PC-9 (cell line): ENCODE measurements at regions of chr10 and their contacts with region 1.

Region 1: GRCh38 chr10:49538381-49539319 is at the start of gene ERCC6:
- DNase-seq: peak; percentile 97 to 98
- H3K4me3 ChIP-seq: peak within 1 kb of the TSS; percentile 99
- H3K27ac ChIP-seq: peak within 1 kb of the TSS; percentile 90
- H3K4me1 ChIP-seq: peaks cover 26% of the 10 kb centered on the region
- H3K27me3 ChIP-seq: no peaks in the 10 kb centered on the region
- CTCF ChIP-seq: no peak
- total RNA-seq, gene ERCC6: 47.1 and 49.7 TPM in 2 replicates

Region 2: DNA sequence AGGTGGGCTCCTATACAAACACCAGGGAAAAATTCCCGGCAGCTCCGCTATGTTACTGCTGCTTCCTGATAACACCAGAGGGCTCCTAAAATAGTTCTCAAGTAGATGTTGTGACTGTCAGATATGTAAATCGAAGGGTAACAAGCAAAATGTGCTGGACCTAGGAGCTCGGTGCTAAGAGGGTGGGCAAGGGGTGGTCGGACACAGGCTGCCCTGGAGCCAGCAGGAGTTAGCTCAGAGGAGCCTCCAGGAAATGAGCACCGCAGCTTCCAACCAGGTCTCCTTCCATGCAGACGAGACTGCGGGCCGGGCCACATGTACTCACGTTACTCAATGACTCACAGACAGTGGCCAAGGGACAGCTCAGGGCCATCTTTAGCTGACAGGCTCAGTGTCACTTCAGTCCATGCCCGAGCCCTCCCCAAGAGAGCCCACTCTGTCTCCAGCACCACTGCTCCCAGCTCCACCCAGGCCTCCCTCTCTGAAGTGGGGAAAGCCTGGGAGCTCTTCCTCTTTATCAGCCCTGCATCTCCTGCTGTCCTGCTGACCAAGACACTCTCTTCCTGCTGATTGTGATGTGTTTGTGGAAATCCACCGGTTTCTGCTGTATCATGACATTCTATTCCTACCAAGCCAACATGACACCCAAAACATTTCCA is 313.3 kb before region 1 on chr10:
- CTCF ChIA-PET with region 1: no interaction called
- POLR2A ChIA-PET with region 1: no interaction called
- intact Hi-C with region 1: no loop called
- DNase-seq: no peak
- H3K4me3 ChIP-seq: no peak overlapping the region
- H3K27ac ChIP-seq: no peak overlapping the region
- H3K4me1 ChIP-seq: no peaks in the 10 kb centered on the region
- H3K27me3 ChIP-seq: 0 out of 2 replicates have a peak, but pooled peaks cover under 1% of the 10 kb centered on the region
- CTCF ChIP-seq: no peak

Region 3: DNA sequence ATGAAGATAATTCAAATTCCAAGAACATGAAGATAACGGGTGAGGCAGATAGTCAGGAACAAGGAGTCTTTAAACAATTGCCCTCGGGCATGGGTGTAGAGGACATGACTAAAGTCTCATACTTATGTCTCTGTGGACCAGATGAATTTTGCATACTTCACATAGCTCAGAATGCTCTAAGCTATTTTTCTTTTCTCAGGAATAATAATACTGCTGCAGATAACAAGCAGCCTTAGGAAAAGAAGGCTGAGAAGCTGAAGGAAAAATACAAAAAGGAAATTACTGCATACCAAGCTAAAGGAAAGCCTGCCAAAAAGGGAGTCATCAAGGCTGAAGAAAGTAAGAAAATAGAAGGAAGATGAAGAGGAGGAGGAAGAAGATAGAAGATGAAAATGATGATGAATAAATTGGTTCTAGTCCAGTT is 13.6 kb after region 1 on chr10:
- CTCF ChIA-PET with region 1: interaction called, 13 read pairs
- POLR2A ChIA-PET with region 1: interaction called, 57 read pairs
- intact Hi-C with region 1: no loop called
- DNase-seq: peak; percentile 67 to 97
- H3K4me3 ChIP-seq: no peak overlapping the region; the same call in 1 of the 2 replicates
- H3K27ac ChIP-seq: peak overlapping the region; percentile 89
- H3K4me1 ChIP-seq: peaks cover 52% of the 10 kb centered on the region
- H3K27me3 ChIP-seq: no peaks in the 10 kb centered on the region
- CTCF ChIP-seq: no peak

Region 4: DNA sequence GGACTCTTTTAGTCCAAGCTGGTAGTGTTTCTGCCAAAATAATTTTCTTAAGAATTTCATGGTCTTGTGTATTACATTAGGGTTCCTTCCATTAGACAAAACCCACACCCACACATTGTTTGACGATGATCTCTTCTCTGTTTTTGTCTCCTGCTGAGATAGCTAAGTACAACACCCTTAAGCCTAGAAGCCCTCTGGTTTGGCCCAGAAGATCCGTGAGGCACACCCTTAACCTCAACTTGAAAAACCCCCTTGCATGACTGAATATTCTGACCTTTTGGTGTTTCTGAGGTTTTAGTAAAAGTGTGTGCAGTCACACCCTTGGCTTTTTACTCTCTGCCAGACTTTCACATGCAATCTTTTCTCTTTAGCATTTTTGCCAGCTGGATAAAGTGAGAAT is 29.6 kb after region 1 on chr10:
- CTCF ChIA-PET with region 1: interaction called, 3 read pairs
- POLR2A ChIA-PET with region 1: interaction called, 7 read pairs
- intact Hi-C with region 1: loop called (anchors 1 kb)
- DNase-seq: peak in 1 of 2 experiments; percentile 80
- H3K4me3 ChIP-seq: peak overlapping the region; percentile 38; the same call in 1 of the 2 replicates
- H3K27ac ChIP-seq: peak overlapping the region; percentile 95
- H3K4me1 ChIP-seq: peaks cover 49% of the 10 kb centered on the region
- H3K27me3 ChIP-seq: no peaks in the 10 kb centered on the region
- CTCF ChIP-seq: no peak

Region 5: DNA sequence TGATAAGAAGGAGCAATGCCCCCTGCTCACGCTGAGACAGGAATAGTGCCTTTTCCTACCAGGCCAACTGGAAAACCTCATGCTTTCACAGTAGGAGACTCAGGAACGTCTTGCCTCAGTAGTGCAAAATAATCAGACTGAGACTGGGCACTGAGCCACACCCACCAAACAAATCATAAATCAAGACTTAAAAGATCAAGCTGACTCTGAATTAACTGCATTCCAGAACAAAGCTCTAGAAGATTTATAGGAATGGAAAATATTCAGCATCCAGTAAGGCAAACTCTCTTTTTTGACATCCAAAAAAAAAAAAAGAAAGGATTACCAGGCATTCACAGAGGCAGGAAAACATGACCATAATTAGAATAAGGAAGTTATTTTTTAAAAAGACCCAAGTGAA is 41.0 kb after region 1 on chr10:
- CTCF ChIA-PET with region 1: interaction called, 11 read pairs
- POLR2A ChIA-PET with region 1: no interaction called
- intact Hi-C with region 1: no loop called
- DNase-seq: no peak
- H3K4me3 ChIP-seq: no peak overlapping the region
- H3K27ac ChIP-seq: no peak overlapping the region
- H3K4me1 ChIP-seq: 0 out of 2 replicates have a peak, but pooled peaks cover under 1% of the 10 kb centered on the region
- H3K27me3 ChIP-seq: no peaks in the 10 kb centered on the region
- CTCF ChIP-seq: no peak

Region 6: DNA sequence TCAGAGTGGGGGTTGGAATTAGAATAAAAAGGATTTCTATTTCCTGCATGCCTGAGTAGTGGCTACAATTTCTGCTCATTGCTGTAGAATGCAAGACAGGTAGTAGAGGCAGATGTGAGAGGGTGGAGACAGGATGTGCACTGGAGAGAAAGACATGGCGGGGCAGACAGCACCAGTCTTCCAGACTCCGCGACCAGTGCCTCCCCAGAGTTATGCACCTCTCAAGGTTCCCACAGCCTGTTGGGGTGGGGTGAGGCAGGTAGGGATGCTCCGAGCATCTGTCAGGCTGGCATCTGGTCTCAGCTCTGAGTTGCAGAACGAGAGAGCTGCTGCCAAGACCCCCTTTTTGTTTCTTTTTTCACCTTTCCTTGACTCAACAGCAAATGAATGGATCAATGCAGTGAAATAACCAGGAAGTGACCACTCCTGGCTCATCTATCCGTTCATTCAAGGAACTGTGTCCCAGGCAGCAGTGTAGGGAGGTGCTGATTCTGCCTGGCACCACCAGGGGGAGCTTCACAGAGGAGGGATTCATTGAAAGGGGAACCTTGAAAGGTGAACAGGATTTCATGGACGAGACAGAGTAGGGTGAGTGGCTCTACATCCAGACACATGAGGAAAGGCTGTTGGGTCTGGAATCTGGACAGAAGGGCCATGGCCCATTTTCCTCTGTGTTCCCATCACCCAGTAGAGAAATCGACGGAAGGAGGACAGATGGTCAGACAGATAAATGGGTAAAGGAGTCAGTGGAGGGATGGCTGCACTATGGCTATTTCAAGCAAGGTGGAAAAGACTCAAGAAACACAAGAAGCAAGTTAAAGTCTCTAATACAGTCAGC is 54.3 kb after region 1 on chr10:
- CTCF ChIA-PET with region 1: interaction called, 13 read pairs
- POLR2A ChIA-PET with region 1: interaction called, 3 read pairs
- intact Hi-C with region 1: loop called (anchors 1 kb)
- DNase-seq: peak; percentile 43 to 65
- H3K4me3 ChIP-seq: no peak overlapping the region
- H3K27ac ChIP-seq: no peak overlapping the region
- H3K4me1 ChIP-seq: no peaks in the 10 kb centered on the region
- H3K27me3 ChIP-seq: no peaks in the 10 kb centered on the region
- CTCF ChIP-seq: peak; percentile 95

Region 7: DNA sequence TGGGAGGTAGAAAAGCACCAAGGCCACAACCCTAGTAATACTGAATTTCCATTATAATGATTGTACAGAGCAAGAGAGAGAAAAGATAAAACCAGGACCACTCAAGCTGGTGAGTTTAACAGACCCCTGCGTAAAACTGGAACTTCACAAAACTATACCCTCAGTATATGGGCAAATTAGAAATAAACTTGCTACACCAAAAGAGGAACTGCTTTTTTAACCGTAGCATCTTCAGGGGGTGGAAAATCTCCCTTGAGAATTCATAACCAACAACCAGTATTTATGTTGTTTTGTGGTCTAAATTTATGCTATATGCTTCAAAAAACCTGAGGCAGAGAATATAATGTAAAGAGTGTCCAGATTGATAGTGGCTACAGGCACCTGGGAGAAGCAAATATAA is 914.0 kb after region 1 on chr10:
- CTCF ChIA-PET with region 1: no interaction called
- POLR2A ChIA-PET with region 1: interaction called, 12 read pairs
- intact Hi-C with region 1: no loop called
- DNase-seq: no peak
- H3K4me3 ChIP-seq: no peak overlapping the region
- H3K27ac ChIP-seq: no peak overlapping the region
- H3K4me1 ChIP-seq: no peaks in the 10 kb centered on the region
- H3K27me3 ChIP-seq: no peaks in the 10 kb centered on the region
- CTCF ChIP-seq: no peak